PC-9 (cell line): ENCODE measurements at regions of chr1 and their contacts with region 1.

Region 1: GRCh38 chr1:201877877-201878401 is 10.8 kb upstream of the SHISA4 start:
- DNase-seq: peak; percentile 41 to 55
- H3K4me3 ChIP-seq: no peak overlapping the region
- H3K27ac ChIP-seq: no peak overlapping the region
- H3K4me1 ChIP-seq: peaks cover 20% of the 10 kb centered on the region
- H3K27me3 ChIP-seq: no peaks in the 10 kb centered on the region
- CTCF ChIP-seq: peak; percentile 79

Region 2: GRCh38 chr1:201602413-201603265 is 275.3 kb before region 1 on chr1:
- CTCF ChIA-PET with region 1: no interaction called
- POLR2A ChIA-PET with region 1: interaction called, 15 read pairs
- intact Hi-C with region 1: no loop called
- DNase-seq: peak in 1 of 2 experiments; percentile 17
- H3K4me3 ChIP-seq: no peak overlapping the region
- H3K27ac ChIP-seq: no peak overlapping the region
- H3K4me1 ChIP-seq: no peaks in the 10 kb centered on the region
- H3K27me3 ChIP-seq: no peaks in the 10 kb centered on the region
- CTCF ChIP-seq: no peak

Region 3: GRCh38 chr1:201859424-201859823 is 18.5 kb before region 1 on chr1:
- CTCF ChIA-PET with region 1: interaction called, 10 read pairs
- POLR2A ChIA-PET with region 1: no interaction called
- intact Hi-C with region 1: no loop called
- DNase-seq: peak; percentile 48 to 68
- H3K4me3 ChIP-seq: no peak overlapping the region
- H3K27ac ChIP-seq: no peak overlapping the region
- H3K4me1 ChIP-seq: 0 out of 2 replicates have a peak, but pooled peaks cover 6% of the 10 kb centered on the region
- H3K27me3 ChIP-seq: no peaks in the 10 kb centered on the region
- CTCF ChIP-seq: no peak

Region 4: GRCh38 chr1:201895913-201896807 is 18.2 kb after region 1 on chr1:
- CTCF ChIA-PET with region 1: interaction called, 23 read pairs
- POLR2A ChIA-PET with region 1: interaction called, 4 read pairs
- intact Hi-C with region 1: no loop called
- DNase-seq: peak; percentile 75 to 89
- H3K4me3 ChIP-seq: no peak overlapping the region
- H3K27ac ChIP-seq: peak overlapping the region; percentile 61
- H3K4me1 ChIP-seq: peaks cover 29% of the 10 kb centered on the region
- H3K27me3 ChIP-seq: no peaks in the 10 kb centered on the region
- CTCF ChIP-seq: peak; percentile 98

Region 5: DNA sequence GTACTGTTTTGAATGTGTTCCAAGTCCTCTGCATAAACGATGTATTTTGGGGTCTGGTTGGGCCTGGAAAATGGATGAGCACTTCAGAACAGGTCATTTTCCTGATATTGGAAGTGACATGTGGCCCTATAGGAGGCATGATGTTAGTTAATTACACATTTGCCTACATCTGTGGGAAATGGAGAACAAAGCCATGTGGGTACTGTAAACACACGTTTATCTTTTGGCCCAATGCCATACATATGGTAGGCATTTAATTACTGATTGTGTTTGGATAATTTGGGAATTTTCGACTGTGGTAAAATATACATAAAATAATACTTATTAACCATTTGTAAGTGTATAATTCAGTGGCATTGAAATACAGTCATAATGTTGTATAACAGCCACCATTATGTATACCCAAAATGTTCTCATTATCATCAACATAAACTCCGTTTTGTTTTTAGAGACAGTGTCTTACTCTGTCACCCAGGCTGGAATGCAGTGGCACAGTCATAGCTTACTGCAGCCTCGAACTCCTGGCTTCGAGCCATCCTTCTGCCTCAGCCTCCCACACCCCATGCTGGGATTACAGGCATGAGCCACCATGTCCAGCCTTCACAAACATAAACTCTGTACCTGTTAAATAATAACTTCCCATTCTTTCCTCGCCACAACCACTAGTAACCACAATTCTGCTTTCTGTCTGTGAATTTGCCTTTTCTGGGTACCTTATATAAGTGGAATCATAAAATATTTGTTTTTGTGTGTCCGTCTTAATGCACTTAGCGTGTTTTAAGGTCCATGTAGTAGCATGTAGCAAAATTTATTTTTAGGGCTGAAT is 92.6 kb after region 1 on chr1:
- CTCF ChIA-PET with region 1: interaction called, 13 read pairs
- POLR2A ChIA-PET with region 1: no interaction called
- intact Hi-C with region 1: loop called (anchors 5 kb)
- DNase-seq: no peak
- H3K4me3 ChIP-seq: no peak overlapping the region
- H3K27ac ChIP-seq: no peak overlapping the region
- H3K4me1 ChIP-seq: 0 out of 2 replicates have a peak, but pooled peaks cover 6% of the 10 kb centered on the region
- H3K27me3 ChIP-seq: no peaks in the 10 kb centered on the region
- CTCF ChIP-seq: no peak

Region 6: DNA sequence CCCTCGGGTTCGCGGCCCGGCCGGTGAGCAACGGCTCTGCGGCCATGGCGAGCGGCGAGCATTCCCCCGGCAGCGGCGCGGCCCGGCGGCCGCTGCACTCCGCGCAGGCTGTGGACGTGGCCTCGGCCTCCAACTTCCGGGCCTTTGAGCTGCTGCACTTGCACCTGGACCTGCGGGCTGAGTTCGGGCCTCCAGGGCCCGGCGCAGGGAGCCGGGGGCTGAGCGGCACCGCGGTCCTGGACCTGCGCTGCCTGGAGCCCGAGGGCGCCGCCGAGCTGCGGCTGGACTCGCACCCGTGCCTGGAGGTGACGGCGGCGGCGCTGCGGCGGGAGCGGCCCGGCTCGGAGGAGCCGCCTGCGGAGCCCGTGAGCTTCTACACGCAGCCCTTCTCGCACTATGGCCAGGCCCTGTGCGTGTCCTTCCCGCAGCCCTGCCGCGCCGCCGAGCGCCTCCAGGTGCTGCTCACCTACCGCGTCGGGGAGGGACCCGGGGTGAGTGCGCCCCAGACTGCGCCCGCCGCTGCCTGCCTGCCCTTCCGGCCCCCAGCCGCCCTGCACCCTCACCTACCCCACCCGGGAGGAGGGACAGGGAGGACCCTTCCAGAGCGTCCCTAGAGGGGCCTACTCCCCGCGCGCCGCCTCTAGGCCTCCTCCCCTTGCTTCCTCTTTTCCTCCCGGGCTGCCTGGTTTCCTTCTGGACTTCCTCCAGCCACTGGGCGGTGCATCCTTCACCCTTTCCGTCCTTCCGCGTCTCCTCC is 104.9 kb after region 1 on chr1 and contains the start of gene RNPEP:
- CTCF ChIA-PET with region 1: interaction called, 4 read pairs
- POLR2A ChIA-PET with region 1: interaction called, 16 read pairs
- intact Hi-C with region 1: no loop called
- DNase-seq: peak; percentile 73 to 76
- H3K4me3 ChIP-seq: peak within 1 kb of the TSS; percentile 72
- H3K27ac ChIP-seq: peak within 1 kb of the TSS; percentile 16
- H3K4me1 ChIP-seq: peaks cover 14% of the 10 kb centered on the region
- H3K27me3 ChIP-seq: no peaks in the 10 kb centered on the region
- CTCF ChIP-seq: no peak; the same call in 1 of the 2 replicates
- total RNA-seq, gene RNPEP: 108 and 123 TPM in 2 replicates

Region 7: GRCh38 chr1:202184750-202185460 is 307.0 kb after region 1 on chr1:
- CTCF ChIA-PET with region 1: interaction called, 14 read pairs
- POLR2A ChIA-PET with region 1: no interaction called
- intact Hi-C with region 1: no loop called
- DNase-seq: peak; percentile 81 to 84
- H3K4me3 ChIP-seq: no peak overlapping the region
- H3K27ac ChIP-seq: no peak overlapping the region
- H3K4me1 ChIP-seq: no peaks in the 10 kb centered on the region
- H3K27me3 ChIP-seq: peaks cover 5% of the 10 kb centered on the region; the same call in 1 of the 2 replicates
- CTCF ChIP-seq: peak; percentile 85